Activated CD4-positive, alpha-beta T cell treated with anti-CD3 and anti-CD28 coated beads, Interleukin-2, amount 10 ng/mL, durations not matched to agents 24 days and 14 days (primary cell): ENCODE measurements at regions of chr9 and their contacts with region 1.

Region 1: GRCh38 chr9:86354011-86354817 is at the start of gene TUT7:
- DNase-seq: peak; percentile 99
- H3K4me3 Mint-ChIP-seq: peak within 1 kb of the TSS; percentile 99
- H3K27ac Mint-ChIP-seq: peak within 1 kb of the TSS; percentile 96
- H3K4me1 Mint-ChIP-seq: peaks cover 26% of the 10 kb centered on the region
- H3K27me3 Mint-ChIP-seq: peaks cover 8% of the 10 kb centered on the region
- total RNA-seq, gene TUT7: 38.9 and 39.7 TPM in 2 replicates

Region 2: DNA sequence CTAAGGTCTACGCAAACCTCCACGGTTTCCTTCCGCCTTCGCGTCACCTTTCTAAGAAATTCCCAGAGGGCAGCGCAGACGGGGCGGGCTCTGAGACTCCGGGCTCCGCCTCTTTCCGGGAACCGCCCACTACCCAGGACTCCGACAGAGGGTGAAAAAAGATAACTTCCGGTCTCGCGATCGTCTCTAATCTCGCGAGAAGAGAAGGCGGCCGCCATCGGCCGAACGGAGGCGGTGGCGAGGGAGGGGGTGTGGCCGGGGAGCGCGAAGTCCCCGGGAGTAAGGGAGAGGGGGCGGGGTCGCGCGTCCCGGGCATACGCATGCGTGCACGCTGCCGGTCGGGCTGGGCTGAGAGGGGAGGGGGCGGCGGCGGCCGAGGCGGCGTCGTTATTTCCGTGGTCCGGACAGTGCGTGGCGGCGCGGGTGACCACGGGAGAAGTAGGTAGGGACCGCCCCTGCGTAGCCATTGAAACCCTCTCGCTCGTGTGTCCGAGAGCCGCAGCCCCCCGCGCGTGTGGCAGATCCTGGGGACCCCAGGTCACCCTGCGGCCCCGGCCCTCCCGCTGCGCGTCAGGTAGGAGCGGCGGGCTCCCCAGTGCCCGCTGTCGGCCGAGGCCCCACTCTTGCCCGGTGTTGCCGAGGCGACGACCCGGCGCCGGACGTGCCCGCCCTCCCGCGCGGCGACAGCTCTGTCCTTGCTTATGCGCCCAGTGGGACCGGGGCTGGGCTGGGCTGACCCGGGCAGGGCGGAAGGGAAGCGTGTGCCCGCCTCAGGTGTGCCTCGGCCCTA is 413.2 kb before region 1 on chr9 and contains the start of gene NAA35:
- intact Hi-C with region 1: loop called (anchors 1 kb)
- DNase-seq: peak; percentile 100
- H3K4me3 Mint-ChIP-seq: no peak within 1 kb of the TSS
- H3K27ac Mint-ChIP-seq: peak within 1 kb of the TSS; percentile 92
- H3K4me1 Mint-ChIP-seq: peaks cover 11% of the 10 kb centered on the region
- H3K27me3 Mint-ChIP-seq: no peaks in the 10 kb centered on the region
- total RNA-seq, gene NAA35: 28.0 and 29.6 TPM in 2 replicates

Region 3: GRCh38 chr9:86282077-86282978 is 71.9 kb before region 1 on chr9 and contains the start of gene ISCA1:
- intact Hi-C with region 1: loop called (anchors 1 kb)
- DNase-seq: peak; percentile 99
- H3K4me3 Mint-ChIP-seq: peak within 1 kb of the TSS; percentile 91
- H3K27ac Mint-ChIP-seq: peak within 1 kb of the TSS; percentile 95
- H3K4me1 Mint-ChIP-seq: peaks cover 33% of the 10 kb centered on the region
- H3K27me3 Mint-ChIP-seq: no peaks in the 10 kb centered on the region
- total RNA-seq, gene ISCA1: 29.4 and 30.1 TPM in 2 replicates

Region 4: DNA sequence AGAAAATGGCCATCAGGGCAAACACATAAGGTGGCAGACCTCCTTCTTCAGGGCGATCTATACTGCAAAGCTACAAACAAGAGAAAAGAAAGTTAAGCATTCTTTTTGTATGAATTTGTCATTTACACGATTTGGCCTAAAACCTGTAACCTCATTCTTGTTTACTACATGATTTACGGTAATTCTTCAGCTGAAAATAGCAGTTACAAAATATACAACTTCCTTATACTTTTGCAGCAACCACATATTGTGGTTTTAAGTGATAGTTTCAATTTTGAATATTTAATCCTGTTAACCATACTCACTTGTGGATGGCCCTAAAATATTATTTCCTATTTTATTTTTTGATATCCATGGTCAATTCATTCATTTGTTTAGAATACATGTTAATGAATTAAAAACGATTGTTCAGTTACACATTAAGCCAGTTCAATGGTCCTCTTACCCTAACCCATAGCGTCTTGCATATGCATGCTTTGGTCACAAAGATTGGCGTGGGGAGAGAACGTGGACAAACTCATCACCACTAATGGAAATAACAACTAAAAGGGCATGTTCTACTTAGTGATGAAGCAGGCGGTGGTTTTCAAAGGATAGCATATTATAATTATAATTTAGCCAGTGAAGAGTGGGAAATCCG is 16.6 kb before region 1 on chr9:
- intact Hi-C with region 1: loop called (anchors 1 kb)
- DNase-seq: peak; percentile 59
- H3K4me3 Mint-ChIP-seq: peak overlapping the region; percentile 83
- H3K27ac Mint-ChIP-seq: peak overlapping the region; percentile 60
- H3K4me1 Mint-ChIP-seq: peaks cover 36% of the 10 kb centered on the region
- H3K27me3 Mint-ChIP-seq: no peaks in the 10 kb centered on the region